AG04449 (cell line): ENCODE measurements at regions of chr14 and their contacts with region 1.

Region 1: GRCh38 chr14:73825551-73826188 is 26.0 kb upstream of the PTGR2 start:
- DNase-seq: no peak
- H3K4me3 ChIP-seq: no peak overlapping the region
- CTCF ChIP-seq: peak; percentile 88

Region 2: DNA sequence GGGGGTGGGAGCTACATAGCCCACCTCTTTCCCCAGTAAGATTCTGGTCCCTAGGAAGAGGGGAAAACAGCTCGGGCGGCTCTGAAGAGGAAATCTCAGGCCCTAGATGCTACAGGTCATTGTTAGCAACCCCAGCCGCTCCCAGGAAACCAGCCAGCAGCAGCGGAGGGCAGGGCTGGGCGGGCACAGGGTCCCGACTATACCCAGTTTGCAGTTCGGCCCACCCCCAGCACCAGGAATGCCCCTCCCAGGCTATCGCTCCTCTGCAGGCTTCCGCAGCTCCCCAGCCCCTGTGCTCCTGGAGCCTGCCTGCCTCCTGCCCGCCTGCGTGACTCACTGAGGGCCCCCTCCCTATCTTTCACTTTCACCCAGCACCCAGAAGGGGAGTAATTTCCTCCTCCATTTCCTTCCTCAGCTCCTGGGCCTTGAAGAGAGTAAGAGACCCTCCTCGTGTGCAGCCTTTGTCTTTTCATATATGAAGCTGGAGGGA is 84.2 kb before region 1 on chr14:
- CTCF ChIA-PET with region 1: interaction called, 16 read pairs
- POLR2A ChIA-PET with region 1: no interaction called
- DNase-seq: no peak
- H3K4me3 ChIP-seq: peak overlapping the region; percentile 36
- CTCF ChIP-seq: no peak

Region 3: GRCh38 chr14:73753959-73754882 is 71.4 kb before region 1 on chr14:
- CTCF ChIA-PET with region 1: interaction called, 13 read pairs
- POLR2A ChIA-PET with region 1: no interaction called
- DNase-seq: no peak
- H3K4me3 ChIP-seq: peak overlapping the region; percentile 38
- CTCF ChIP-seq: no peak

Region 4: GRCh38 chr14:73759714-73760597 is 65.7 kb before region 1 on chr14:
- CTCF ChIA-PET with region 1: interaction called, 13 read pairs
- POLR2A ChIA-PET with region 1: no interaction called
- DNase-seq: peak; percentile 92
- H3K4me3 ChIP-seq: peak overlapping the region; percentile 89
- CTCF ChIP-seq: no peak

Region 5: DNA sequence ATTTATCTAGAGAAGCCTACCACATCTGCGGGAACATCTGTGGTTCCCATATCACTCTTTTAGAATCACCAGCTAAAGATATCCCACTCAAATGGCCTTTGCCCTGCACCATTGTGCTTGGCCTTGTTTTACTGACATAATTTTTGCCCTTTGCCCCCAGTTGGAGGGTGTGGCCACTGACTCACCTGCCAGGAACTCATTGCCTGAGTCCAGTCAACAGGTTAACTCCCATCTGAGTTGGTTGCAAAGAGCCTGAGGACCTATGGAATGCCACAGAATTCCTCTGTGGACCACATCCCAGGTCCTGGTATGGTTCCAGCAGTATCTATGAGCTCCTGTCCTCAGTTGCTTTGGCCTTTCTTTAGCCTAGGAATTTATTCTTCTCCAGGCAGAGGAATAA is 29.7 kb before region 1 on chr14:
- CTCF ChIA-PET with region 1: interaction called, 17 read pairs
- POLR2A ChIA-PET with region 1: no interaction called
- DNase-seq: no peak
- H3K4me3 ChIP-seq: no peak overlapping the region
- CTCF ChIP-seq: no peak